HEK293T (cell line): ENCODE measurements at regions of chr15 and their contacts with region 1.

Region 1: GRCh38 chr15:76150971-76151598 is 91.3 kb downstream of the TMEM266 start:
- DNase-seq: peak; percentile 88

Region 2: GRCh38 chr15:76057332-76058000 is 93.6 kb before region 1 on chr15:
- CTCF ChIA-PET with region 1: interaction called, 13 read pairs
- POLR2A ChIA-PET with region 1: interaction called, 3 read pairs
- DNase-seq: peak; percentile 31

Region 3: DNA sequence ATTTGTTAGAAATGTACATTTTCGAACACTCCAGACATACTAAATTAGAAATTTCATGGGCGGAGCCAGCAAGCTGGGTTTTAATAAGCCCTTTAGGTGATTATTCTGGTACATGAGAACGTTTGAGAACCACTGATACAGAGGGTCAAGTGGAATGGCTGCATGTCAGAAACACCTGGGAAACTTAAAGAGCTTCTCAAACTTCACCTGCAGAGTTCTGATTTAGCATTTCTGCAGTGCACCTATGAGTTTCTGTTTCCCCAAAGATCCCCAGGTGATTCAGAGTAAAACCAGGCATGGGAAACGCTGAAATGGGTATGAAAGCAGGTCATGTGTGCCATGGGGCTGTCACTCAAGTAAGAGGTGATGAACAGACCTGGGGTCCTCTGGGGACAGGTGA is 23.2 kb before region 1 on chr15:
- CTCF ChIA-PET with region 1: interaction called, 10 read pairs
- POLR2A ChIA-PET with region 1: no interaction called
- DNase-seq: no peak

Region 4: DNA sequence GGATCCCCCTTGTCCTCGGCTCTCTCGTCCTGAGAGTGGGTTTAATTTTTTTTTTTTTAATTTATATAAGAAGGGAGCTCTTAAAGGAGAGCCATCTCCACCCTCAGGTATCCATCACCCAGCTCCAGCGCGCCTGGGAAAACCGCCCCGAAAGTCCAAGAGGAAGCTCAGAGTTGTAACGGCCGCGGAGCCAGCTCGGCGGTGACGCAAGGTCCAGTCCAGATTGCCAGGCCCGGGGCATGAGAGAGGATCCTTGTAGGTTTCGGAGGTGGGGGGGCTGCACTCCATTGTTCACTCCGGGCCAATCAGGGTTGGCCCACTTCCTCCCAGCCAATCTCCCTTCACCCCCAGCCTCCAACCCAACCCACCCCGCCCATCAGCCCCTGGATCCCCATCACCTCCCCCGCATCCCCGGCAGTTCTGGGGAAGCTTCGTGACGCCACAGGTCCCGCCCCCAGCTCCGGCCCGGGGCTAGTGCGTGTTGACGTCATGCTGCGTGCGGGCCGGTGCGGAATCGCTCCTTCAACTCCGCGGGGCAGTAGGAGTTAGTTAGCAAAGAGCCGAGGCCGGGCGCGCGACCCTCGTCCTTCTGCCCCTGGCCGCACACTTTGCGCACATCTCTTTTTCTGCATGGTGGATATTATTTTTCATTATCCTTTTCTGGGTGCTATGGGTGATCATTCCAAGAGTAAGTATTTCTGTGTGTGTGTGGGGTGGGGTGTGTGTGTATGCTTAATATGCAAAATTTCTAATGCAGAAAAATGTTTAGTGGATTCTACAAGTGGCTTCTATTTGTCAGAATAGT is 185.4 kb after region 1 on chr15 and contains the start of gene ISL2:
- CTCF ChIA-PET with region 1: no interaction called
- POLR2A ChIA-PET with region 1: no interaction called
- DNase-seq: peak; percentile 90